ENCODE measurements at regions of chr5 and their contacts with region 1.

Region 1: DNA sequence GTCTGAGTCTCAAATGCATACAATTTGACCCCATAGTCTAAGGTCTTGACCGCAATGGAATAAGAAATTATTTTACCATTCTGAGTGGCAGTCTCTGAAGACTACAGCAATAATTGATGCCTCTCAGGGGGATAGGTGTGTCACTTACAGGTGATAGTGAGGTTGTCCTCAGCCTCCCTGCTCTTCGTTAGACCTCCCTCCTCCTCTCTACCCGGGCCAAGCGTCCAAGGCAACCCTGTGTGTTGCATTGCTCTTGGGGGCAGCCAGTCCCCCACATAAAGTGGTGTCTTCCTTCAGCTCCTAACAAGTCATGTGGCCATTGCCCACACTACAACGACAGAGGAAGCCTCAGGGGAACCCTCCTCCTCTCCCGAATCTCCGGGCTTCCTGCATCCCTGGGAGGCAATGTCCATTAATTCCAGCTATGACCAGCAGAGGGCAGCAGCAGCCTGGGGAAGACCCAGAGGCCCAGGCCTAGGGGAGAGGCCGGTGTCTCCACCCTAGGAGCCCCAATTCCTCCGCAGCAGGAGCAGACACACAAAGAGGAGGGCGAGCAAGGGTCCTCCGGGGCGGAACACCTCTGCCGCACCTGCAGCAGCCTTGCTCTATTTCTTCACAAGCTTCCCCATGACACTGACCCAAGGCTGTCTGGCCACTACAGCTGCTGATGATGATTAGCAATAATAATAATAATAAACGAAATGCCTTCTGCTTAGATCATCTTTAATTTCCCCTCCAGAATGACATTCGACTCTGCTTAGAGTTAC is 134.8 kb downstream of the KCNIP1 start:
- DNase-seq: peak; percentile 84
- ATAC-seq: peak; percentile 74
- H3K4me3 Mint-ChIP-seq: no peak overlapping the region
- H3K27ac Mint-ChIP-seq: no peak overlapping the region
- H3K4me1 Mint-ChIP-seq: peaks cover 7% of the 10 kb centered on the region
- H3K27me3 Mint-ChIP-seq: peaks cover 8% of the 10 kb centered on the region

Region 2: GRCh38 chr5:170546282-170546681 is 92.4 kb before region 1 on chr5:
- CTCF ChIA-PET with region 1: no interaction called
- POLR2A ChIA-PET with region 1: no interaction called
- intact Hi-C with region 1: no loop called
- DNase-seq: no peak
- ATAC-seq: no peak
- H3K4me3 Mint-ChIP-seq: no peak overlapping the region
- H3K27ac Mint-ChIP-seq: no peak overlapping the region
- H3K4me1 Mint-ChIP-seq: no peaks in the 10 kb centered on the region
- H3K27me3 Mint-ChIP-seq: peaks cover 12% of the 10 kb centered on the region

Region 3: GRCh38 chr5:170791325-170791954 is 152.8 kb after region 1 on chr5:
- CTCF ChIA-PET with region 1: interaction called, 13 read pairs
- POLR2A ChIA-PET with region 1: no interaction called
- intact Hi-C with region 1: loop called (anchors 1 to 5 kb)
- DNase-seq: peak; percentile 59
- ATAC-seq: no peak
- H3K4me3 Mint-ChIP-seq: no peak overlapping the region
- H3K27ac Mint-ChIP-seq: no peak overlapping the region
- H3K4me1 Mint-ChIP-seq: no peaks in the 10 kb centered on the region
- H3K27me3 Mint-ChIP-seq: no peaks in the 10 kb centered on the region

Region 4: GRCh38 chr5:171336521-171337209 is 698.0 kb after region 1 on chr5:
- CTCF ChIA-PET with region 1: interaction called, 4 read pairs
- POLR2A ChIA-PET with region 1: no interaction called
- intact Hi-C with region 1: loop called in 1 of 2 experiments (anchors 2 kb)
- DNase-seq: peak; percentile 60
- ATAC-seq: peak; percentile 61
- H3K4me3 Mint-ChIP-seq: peak overlapping the region; percentile 39
- H3K27ac Mint-ChIP-seq: no peak overlapping the region
- H3K4me1 Mint-ChIP-seq: peaks cover 3% of the 10 kb centered on the region
- H3K27me3 Mint-ChIP-seq: peaks cover 26% of the 10 kb centered on the region

Measured in activated CD4-positive, alpha-beta T cell treated with anti-CD3 and anti-CD28 coated beads for 36 hours (primary cell).